Dorsolateral prefrontal cortex (tissue), 120 donors: ENCODE measurements at regions of chr20 and their contacts with region 1.

Region 1: DNA sequence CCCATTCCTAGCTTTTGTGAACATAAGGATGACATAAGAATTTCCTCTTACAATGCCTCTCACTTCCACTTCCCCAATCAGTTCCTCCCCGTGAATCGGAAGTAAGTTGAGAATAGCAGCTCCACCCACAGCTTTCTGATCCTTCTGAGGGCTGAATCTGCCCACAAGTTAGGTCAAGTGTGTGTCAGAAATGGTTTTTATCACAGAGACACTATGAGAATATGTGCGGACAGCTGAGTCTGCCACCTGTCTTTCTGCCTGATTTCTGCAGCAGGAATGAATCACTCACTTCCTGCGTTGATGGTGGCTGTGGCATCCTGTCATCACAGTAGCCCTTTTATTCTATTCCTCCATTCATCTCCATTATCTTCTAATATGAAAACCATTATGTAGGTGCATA is 70.2 kb downstream of the RIN2 start:
- DNase-seq: peak in 1 of 10 donors; percentile 43
- H3K4me3 ChIP-seq: no peak overlapping the region
- H3K27ac ChIP-seq: peak overlapping the region in 2 of 59 donors; percentile 12 to 22
- H3K27me3 ChIP-seq: no peaks in the 10 kb centered on the region
- CTCF ChIP-seq: peak in 52 of 56 donors; percentile 16 to 73 (median 48)

Region 2: DNA sequence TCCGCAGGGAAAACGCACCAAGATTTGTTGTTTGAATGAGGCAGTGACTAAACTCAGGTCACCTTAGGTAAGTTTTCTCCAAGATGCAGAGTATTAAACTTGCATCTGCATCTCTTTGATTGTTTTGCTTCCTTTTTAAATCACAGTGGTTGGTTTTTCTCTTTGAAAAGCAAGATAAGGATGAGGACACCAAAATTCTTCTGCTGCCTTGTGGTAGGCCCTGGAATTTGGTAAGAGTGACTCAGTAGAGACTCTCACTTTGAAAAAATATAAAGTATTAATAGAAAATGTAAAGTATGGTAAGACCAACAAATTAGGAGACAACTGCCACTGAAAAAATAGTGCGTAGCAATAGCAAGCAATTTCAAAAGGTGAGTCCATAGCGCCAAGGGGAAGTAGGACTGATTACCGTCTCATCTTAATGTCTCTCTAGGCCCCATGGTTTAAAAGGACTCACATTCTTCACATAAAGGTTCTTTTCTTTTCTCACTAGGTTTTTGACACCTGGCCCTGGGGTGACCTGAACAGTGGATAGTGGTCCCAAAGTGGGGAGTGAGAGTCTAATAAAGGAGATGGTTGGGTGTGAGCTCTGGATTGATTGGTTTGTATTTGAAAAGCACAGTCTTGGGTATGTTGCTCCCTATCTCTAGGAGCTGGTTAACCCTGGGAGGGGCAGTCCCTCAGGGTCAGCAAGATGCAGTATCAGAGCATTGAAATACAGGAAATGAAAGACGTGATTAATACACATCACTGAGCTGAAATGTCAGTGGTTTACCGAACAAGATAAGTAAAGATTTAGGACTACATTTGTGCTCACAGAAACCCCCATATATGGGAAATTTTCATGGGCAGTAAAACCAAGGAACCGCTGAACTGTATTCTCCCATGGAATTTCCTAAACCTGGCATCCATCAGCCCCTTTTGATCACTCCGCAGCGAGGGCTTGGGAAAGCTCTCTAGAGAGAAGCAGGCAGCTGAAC is 394.6 kb before region 1 on chr20:
- intact Hi-C with region 1: no loop called
- DNase-seq: no peak
- H3K4me3 ChIP-seq: no peak overlapping the region
- H3K27ac ChIP-seq: no peak overlapping the region
- H3K27me3 ChIP-seq: peaks cover 0 to 4% (median 0%) of the 10 kb centered on the region in 45 donors
- CTCF ChIP-seq: no peak

Region 3: GRCh38 chr20:19794941-19795340 is 33.3 kb before region 1 on chr20:
- intact Hi-C with region 1: loop called in 1 of 2 experiments (anchors 5 kb)
- DNase-seq: no peak
- H3K4me3 ChIP-seq: no peak overlapping the region
- H3K27ac ChIP-seq: no peak overlapping the region
- H3K27me3 ChIP-seq: no peaks in the 10 kb centered on the region
- CTCF ChIP-seq: no peak

Region 4: DNA sequence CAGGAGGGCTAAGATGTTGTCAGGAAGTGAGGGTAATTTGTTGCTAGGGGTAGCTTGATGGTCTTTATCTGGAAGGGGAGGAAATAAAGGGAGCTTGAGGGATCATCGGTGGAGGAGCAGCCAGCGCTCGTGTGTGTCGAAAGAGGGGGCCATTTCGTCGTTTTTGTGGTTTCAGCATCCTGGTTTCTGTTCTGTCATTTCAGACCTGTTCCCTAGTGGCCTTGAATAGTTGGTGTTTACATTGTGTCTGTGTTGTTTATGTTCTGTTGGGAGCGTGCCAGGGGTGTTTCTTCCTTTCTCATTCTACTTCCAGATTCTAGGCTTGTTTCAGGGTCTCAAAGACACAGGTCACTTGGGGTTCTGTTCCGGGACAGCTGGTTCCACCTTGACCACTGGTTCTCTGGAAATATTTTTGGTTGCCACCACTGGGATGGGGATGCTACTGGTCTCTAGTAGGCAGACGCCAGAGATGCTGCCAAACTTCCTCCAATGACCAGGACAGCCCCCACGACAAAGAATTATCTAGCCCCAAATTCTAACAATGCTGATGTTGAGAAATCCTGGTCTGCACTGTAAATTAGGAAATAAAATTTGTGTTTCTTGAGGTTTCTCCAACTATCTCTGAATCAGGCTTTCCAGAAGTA is 75.1 kb after region 1 on chr20:
- intact Hi-C with region 1: no loop called
- DNase-seq: peak in 1 of 10 donors; percentile 37
- H3K4me3 ChIP-seq: no peak overlapping the region
- H3K27ac ChIP-seq: peak overlapping the region in 17 of 59 donors; percentile 1 to 63 (median 26)
- H3K27me3 ChIP-seq: no peaks in the 10 kb centered on the region
- CTCF ChIP-seq: peak in 36 of 56 donors; percentile 7 to 58 (median 29)